ENCODE measurements at regions of chr11 and their contacts with region 1.

Region 1: DNA sequence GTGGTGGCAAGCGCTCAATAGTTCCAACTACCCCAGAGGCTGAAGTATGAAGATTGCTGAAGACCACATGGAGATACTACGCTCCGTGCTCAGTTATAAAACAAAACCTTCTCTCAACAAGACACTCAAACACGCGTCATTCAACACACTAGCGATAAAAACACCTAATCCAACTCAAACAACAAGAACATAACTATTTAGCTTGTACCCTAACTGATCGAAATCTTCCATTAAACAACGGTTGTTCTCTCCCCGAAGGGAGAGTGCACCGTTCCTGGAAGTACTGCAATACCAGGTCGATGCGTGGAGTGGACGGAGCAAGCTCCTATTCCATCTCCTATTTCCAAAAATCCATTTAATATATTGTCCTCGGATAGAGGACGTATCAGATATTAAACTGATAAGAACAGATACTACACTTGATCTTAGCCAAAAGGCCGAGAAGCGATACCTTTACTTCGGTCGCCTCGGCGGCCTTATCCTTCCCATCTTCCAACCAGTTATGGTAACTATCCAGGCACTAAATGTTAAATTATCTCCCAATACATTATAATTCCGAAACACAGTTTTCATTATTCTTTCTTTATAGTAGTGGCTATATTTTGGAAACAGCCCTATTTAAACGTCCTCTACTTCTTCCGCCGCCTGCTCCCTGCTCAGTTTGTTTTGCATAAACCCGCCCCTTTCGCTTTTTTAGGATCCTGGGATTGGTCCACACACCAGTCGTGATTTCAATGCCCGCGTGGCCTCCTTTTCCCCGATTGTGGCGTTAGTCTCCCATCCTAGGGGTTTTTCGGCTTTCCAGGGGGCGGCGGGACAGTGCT is 2.2 kb upstream of the WDR74 start:
- DNase-seq: peak; percentile 68 to 95 (median 81)
- ATAC-seq: peak; percentile 42
- H3K4me3 ChIP-seq: peak overlapping the region; percentile 72
- H3K4me3 Mint-ChIP-seq: no peak overlapping the region
- H3K27ac ChIP-seq: peak overlapping the region; percentile 97 to 100
- H3K27ac Mint-ChIP-seq: no peak overlapping the region
- H3K4me1 ChIP-seq: peaks cover 44% of the 10 kb centered on the region
- H3K4me1 Mint-ChIP-seq: peaks cover 22% of the 10 kb centered on the region
- H3K27me3 ChIP-seq: no peaks in the 10 kb centered on the region
- H3K27me3 Mint-ChIP-seq: no peaks in the 10 kb centered on the region
- CTCF ChIP-seq: no peak

Region 2: DNA sequence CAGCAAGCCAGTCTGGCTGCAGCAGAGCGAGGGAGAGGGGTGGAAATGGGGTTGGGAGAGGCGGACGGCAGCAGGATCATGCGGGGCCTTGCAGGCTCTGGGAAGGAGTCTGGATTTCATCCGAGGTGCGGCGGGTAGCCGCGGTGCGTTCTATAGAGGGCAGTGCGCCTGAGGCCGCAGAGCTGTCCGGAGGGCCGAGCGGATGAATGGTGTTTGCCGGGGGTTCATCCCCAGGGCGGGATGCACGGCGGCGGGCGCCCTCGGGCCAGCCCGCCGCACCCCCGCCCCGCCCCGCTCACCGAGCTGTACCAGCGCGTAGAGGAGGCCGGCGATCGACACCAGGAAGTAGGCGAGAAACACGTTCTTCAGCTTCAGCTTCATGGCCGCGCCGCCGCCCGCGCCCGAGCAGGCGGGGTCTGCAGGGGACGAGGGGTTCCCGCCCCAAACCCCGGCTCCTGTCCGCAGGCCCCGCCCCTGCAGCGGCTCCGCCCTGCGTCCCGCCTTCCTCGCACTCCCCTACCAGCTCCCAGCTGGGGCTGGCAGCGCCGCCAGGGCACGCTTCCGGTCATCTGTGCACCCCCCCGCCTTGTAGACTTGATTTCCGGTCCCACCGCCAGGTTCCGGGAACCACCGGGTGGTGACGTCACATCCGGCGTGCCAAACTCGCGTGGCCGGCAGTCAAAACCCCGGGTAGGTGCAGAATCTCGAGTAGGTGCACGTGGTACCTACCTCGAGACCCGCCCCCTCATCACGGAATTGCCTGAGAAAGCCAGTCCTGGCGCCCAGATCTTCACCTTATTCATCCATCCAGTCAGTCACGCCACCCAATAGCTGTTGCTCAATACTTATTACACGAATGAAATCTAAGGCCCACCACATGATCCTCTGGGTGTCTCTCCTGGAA is 219.8 kb before region 1 on chr11 and contains the start of gene B3GAT3:
- CTCF ChIA-PET with region 1: no interaction called
- POLR2A ChIA-PET with region 1: interaction called, 10 read pairs
- intact Hi-C with region 1: no loop called
- DNase-seq: peak; percentile 91 to 99 (median 95)
- ATAC-seq: peak; percentile 82
- H3K4me3 ChIP-seq: peak within 1 kb of the TSS; percentile 69
- H3K4me3 Mint-ChIP-seq: peak within 1 kb of the TSS; percentile 95
- H3K27ac ChIP-seq: peak within 1 kb of the TSS; percentile 86 to 88
- H3K27ac Mint-ChIP-seq: peak within 1 kb of the TSS; percentile 89
- H3K4me1 ChIP-seq: peaks cover 32% of the 10 kb centered on the region
- H3K4me1 Mint-ChIP-seq: peaks cover 27% of the 10 kb centered on the region
- H3K27me3 ChIP-seq: no peaks in the 10 kb centered on the region
- H3K27me3 Mint-ChIP-seq: no peaks in the 10 kb centered on the region
- CTCF ChIP-seq: no peak
- total RNA-seq, gene B3GAT3: 47.2 to 49.5 TPM

Region 3: GRCh38 chr11:62671575-62672389 is 169.8 kb before region 1 on chr11 and contains the starts of genes LBHD1 and UQCC3:
- CTCF ChIA-PET with region 1: no interaction called
- POLR2A ChIA-PET with region 1: interaction called, 25 read pairs
- intact Hi-C with region 1: no loop called
- DNase-seq: peak; percentile 50 to 89 (median 68)
- ATAC-seq: peak; percentile 74
- H3K4me3 ChIP-seq: peak within 1 kb of the TSS; percentile 98
- H3K4me3 Mint-ChIP-seq: peak within 1 kb of the TSS; percentile 91
- H3K27ac ChIP-seq: peak within 1 kb of the TSS; percentile 72 to 83
- H3K27ac Mint-ChIP-seq: peak within 1 kb of the TSS; percentile 87
- H3K4me1 ChIP-seq: peaks cover 55% of the 10 kb centered on the region
- H3K4me1 Mint-ChIP-seq: peaks cover 53% of the 10 kb centered on the region
- H3K27me3 ChIP-seq: no peaks in the 10 kb centered on the region
- H3K27me3 Mint-ChIP-seq: no peaks in the 10 kb centered on the region
- CTCF ChIP-seq: no peak
- total RNA-seq, gene LBHD1: 10.4 to 10.5 TPM
- total RNA-seq, gene UQCC3: 1.5 to 2.3 TPM

Region 4: GRCh38 chr11:62753736-62754603 is 87.6 kb before region 1 on chr11 and contains the start of gene ZBTB3:
- CTCF ChIA-PET with region 1: no interaction called
- POLR2A ChIA-PET with region 1: interaction called, 123 read pairs
- intact Hi-C with region 1: loop called in 1 of 2 experiments (anchors 5 kb)
- DNase-seq: peak; percentile 92 to 100 (median 97)
- ATAC-seq: peak; percentile 93
- H3K4me3 ChIP-seq: peak within 1 kb of the TSS; percentile 80
- H3K4me3 Mint-ChIP-seq: peak within 1 kb of the TSS; percentile 93
- H3K27ac ChIP-seq: peak within 1 kb of the TSS; percentile 84 to 88
- H3K27ac Mint-ChIP-seq: peak within 1 kb of the TSS; percentile 89
- H3K4me1 ChIP-seq: peaks cover 41% of the 10 kb centered on the region
- H3K4me1 Mint-ChIP-seq: peaks cover 35% of the 10 kb centered on the region
- H3K27me3 ChIP-seq: no peaks in the 10 kb centered on the region
- H3K27me3 Mint-ChIP-seq: no peaks in the 10 kb centered on the region
- CTCF ChIP-seq: no peak
- total RNA-seq, gene ZBTB3: 2.3 to 3.5 TPM

Region 5: DNA sequence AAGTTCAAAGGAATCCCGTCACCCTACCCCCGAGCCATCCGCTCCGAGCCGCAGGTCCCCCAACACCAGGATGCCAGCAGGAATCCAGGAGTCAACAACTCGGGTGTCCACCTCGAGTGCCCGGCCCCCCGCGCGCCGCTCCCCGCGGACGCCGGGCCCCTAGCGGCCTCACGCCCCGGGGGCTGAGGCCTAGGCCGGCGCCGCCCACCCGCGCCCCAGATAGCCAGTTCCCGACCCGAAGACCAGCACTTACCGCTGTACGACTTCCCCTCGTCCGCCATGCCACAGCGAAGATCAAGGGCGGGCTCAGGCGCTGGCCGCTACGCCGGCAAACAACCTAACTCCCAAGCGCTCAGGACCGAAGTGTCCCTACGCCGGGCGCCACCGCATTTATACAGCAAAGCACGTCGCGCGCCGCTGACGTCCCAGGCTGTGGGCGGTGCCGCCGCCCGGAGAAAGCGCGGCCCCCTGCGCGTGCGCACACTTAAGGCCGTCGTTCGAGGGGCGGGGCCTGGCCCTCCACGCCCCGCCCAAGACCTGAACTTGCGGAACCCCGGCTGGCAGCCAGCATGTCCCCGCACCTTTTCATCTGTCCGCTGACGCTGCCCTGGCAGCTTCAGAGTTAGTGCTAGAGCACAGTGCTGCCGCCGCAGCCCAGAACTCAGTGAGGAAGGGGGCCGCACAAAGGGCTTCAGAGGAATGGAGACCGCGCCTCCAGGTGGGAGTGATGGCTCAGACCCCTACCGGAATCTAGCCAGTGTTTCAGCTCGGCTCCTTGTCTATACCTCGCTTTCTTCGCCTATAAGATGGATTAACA is 36.3 kb before region 1 on chr11 and contains the start of gene NXF1:
- CTCF ChIA-PET with region 1: interaction called, 3 read pairs
- POLR2A ChIA-PET with region 1: interaction called, 96 read pairs
- intact Hi-C with region 1: loop called (anchors 1 kb)
- DNase-seq: peak; percentile 88 to 98 (median 96)
- ATAC-seq: peak; percentile 82
- H3K4me3 ChIP-seq: peak within 1 kb of the TSS; percentile 70
- H3K4me3 Mint-ChIP-seq: peak within 1 kb of the TSS; percentile 98
- H3K27ac ChIP-seq: peak within 1 kb of the TSS; percentile 60 to 83
- H3K27ac Mint-ChIP-seq: peak within 1 kb of the TSS; percentile 97
- H3K4me1 ChIP-seq: peaks cover 36% of the 10 kb centered on the region
- H3K4me1 Mint-ChIP-seq: peaks cover 41% of the 10 kb centered on the region
- H3K27me3 ChIP-seq: no peaks in the 10 kb centered on the region
- H3K27me3 Mint-ChIP-seq: no peaks in the 10 kb centered on the region
- CTCF ChIP-seq: no peak
- total RNA-seq, gene NXF1: 343 to 358 TPM

Region 6: DNA sequence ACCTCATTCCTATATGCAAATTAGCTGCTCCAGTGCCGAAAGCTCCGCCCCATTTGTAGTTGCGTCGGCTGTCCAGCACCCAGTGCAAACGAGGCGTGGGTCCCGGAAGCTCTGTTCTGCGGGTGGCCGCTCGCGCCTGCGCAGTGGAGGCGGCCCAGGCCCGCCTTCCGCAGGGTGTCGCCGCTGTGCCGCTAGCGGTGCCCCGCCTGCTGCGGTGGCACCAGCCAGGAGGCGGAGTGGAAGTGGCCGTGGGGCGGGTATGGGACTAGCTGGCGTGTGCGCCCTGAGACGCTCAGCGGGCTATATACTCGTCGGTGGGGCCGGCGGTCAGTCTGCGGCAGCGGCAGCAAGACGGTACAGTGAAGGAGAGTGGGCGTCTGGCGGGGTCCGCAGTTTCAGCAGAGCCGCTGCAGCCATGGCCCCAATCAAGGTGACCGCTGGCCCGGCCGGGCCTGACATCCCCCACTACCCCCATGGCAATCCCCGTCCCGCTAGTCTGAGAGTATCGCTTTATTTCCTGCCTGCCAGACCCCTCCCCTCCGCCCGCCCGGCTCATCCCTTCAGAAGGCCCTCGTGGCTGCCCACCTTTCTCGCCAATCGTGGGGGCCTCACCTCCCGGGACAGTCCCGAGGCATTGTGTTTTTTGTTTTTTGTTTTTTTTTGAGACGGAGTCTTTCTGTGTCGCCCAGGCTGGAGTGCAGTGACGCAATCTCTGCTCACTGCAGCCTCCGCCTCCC is 1476.6 kb after region 1 on chr11 and contains the start of gene PRDX5:
- CTCF ChIA-PET with region 1: no interaction called
- POLR2A ChIA-PET with region 1: interaction called, 12 read pairs
- intact Hi-C with region 1: no loop called
- DNase-seq: peak; percentile 88 to 99 (median 94)
- ATAC-seq: peak; percentile 72
- H3K4me3 ChIP-seq: peak within 1 kb of the TSS; percentile 96
- H3K4me3 Mint-ChIP-seq: peak within 1 kb of the TSS; percentile 92
- H3K27ac ChIP-seq: peak within 1 kb of the TSS; percentile 93 to 99
- H3K27ac Mint-ChIP-seq: peak within 1 kb of the TSS; percentile 98
- H3K4me1 ChIP-seq: peaks cover 34% of the 10 kb centered on the region
- H3K4me1 Mint-ChIP-seq: peaks cover 40% of the 10 kb centered on the region
- H3K27me3 ChIP-seq: no peaks in the 10 kb centered on the region
- H3K27me3 Mint-ChIP-seq: no peaks in the 10 kb centered on the region
- CTCF ChIP-seq: peak; percentile 40
- total RNA-seq, gene PRDX5: 31.7 to 33.1 TPM

Measured in CD4-positive, alpha-beta T cell (primary cell).